ENCODE measurements at regions of chr9 and their contacts with region 1.

Region 1: DNA sequence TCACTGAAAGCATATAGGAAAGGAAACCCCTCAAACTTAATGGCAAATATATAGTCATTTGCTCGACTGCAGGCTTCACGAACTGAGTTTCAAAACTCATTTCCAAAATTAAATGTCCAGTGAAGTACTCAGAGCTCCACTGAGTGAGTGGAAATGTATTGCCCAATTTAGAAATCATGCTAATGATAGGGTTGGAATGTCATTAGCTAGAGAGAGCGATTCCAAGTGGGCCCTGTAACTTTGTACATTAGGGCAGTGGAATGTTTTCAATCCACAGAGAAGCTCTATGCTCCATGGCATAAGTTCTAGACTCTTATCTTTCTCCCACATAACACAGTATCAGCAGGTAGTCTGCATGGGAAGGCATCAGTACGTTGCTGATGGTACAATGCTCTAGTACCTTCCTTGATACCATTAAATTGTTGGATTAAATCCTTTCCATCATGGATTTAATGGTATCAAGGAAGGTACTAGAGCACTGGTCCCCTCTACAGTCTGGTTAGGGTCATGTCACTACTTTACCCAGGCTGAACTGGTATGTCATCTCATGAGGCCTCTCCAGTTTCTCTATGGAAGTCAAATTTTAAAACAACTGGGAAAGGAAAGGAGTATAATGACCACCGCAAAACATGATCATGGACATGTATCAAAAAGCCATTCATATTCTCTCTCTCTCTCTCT is 183.2 kb upstream of the RASEF start:
- DNase-seq: no peak
- H3K4me3 ChIP-seq: no peak overlapping the region
- H3K27ac ChIP-seq: no peak overlapping the region
- H3K4me1 ChIP-seq: no peaks in the 10 kb centered on the region
- H3K27me3 ChIP-seq: no peaks in the 10 kb centered on the region
- CTCF ChIP-seq: no peak

Region 2: DNA sequence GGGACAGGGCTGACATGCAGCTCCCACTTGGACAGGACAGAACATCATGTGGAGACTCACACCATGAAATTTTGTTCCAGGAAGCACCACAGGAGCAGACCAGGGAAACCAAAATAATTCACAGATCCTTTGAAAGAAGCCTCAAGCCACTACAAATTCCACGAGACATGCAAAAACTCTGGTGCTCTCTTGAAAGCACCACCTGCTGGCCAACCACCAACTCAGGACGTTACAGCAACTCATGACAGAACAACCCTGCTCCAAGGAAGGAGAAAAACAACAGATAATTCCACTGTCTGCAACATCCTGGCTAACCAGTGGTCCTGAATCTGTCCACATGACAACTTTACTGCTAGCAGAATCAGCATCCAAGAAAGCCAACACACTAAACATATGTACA is 741.5 kb before region 1 on chr9:
- CTCF ChIA-PET with region 1: no interaction called
- dilution Hi-C with region 1: no loop called
- in situ Hi-C with region 1: no loop called
- intact Hi-C with region 1: no loop called
- DNase-seq: no peak
- H3K4me3 ChIP-seq: no peak overlapping the region
- H3K27ac ChIP-seq: no peak overlapping the region
- H3K4me1 ChIP-seq: no peaks in the 10 kb centered on the region
- H3K27me3 ChIP-seq: no peaks in the 10 kb centered on the region
- CTCF ChIP-seq: no peak

Region 3: GRCh38 chr9:83219152-83219923 is 26.8 kb before region 1 on chr9:
- CTCF ChIA-PET with region 1: no interaction called
- dilution Hi-C with region 1: no loop called
- in situ Hi-C with region 1: no loop called
- intact Hi-C with region 1: no loop called
- DNase-seq: peak; percentile 72
- H3K4me3 ChIP-seq: peak overlapping the region; percentile 45 to 86 (median 62)
- H3K27ac ChIP-seq: peak overlapping the region; percentile 60
- H3K4me1 ChIP-seq: peaks cover 23% of the 10 kb centered on the region
- H3K27me3 ChIP-seq: no peaks in the 10 kb centered on the region
- CTCF ChIP-seq: peak; percentile 32 to 71

Region 4: GRCh38 chr9:83304686-83305085 is 58.6 kb after region 1 on chr9:
- CTCF ChIA-PET with region 1: no interaction called
- dilution Hi-C with region 1: no loop called
- in situ Hi-C with region 1: no loop called
- intact Hi-C with region 1: loop called (anchors 2 kb)
- DNase-seq: no peak
- H3K4me3 ChIP-seq: no peak overlapping the region
- H3K27ac ChIP-seq: no peak overlapping the region
- H3K4me1 ChIP-seq: no peaks in the 10 kb centered on the region
- H3K27me3 ChIP-seq: no peaks in the 10 kb centered on the region
- CTCF ChIP-seq: no peak

Measured in mammary epithelial cell (primary cell).